ENCODE measurements at regions of chr12 and their contacts with region 1.

Region 1: GRCh38 chr12:130945786-130946492 is 7.8 kb upstream of the ADGRD1 start:
- DNase-seq: no peak
- H3K4me3 ChIP-seq: no peak overlapping the region
- H3K4me1 ChIP-seq: no peaks in the 10 kb centered on the region
- H3K27me3 ChIP-seq: no peaks in the 10 kb centered on the region

Region 2: GRCh38 chr12:131142891-131143657 is 197.1 kb after region 1 on chr12:
- in situ Hi-C with region 1: no loop called
- DNase-seq: no peak
- H3K4me3 ChIP-seq: no peak overlapping the region
- H3K4me1 ChIP-seq: no peaks in the 10 kb centered on the region
- H3K27me3 ChIP-seq: no peaks in the 10 kb centered on the region; the same call in 1 of the 2 replicates

Region 3: DNA sequence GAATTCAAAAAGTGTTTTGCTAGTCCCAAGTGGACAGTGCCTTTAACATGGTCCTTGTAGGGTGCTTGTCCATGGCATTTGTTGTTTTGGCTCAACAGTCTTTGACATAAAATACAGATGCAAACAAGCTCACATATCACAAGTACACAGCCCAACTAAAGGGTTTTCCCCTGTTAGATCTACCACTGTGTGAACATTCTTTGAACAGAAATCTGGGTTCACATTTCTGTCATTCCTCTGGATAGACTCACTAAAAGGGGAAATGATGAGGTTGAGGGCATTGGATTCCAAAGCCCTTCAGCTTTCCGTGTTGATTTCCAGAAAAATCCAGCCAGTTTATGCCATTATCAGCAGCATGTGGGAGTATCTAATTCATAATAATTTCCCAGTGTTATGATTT is 1057.9 kb after region 1 on chr12:
- in situ Hi-C with region 1: loop called (anchors 25 kb)
- DNase-seq: no peak
- H3K4me3 ChIP-seq: no peak overlapping the region
- H3K4me1 ChIP-seq: no peaks in the 10 kb centered on the region
- H3K27me3 ChIP-seq: no peaks in the 10 kb centered on the region

Measured in HAP-1 (cell line).